ENCODE measurements at regions of chr11 and their contacts with region 1.

Region 1: GRCh38 chr11:108101090-108101775 is 20.1 kb upstream of the ACAT1 start:
- DNase-seq: no peak
- H3K4me3 ChIP-seq: no peak overlapping the region
- H3K27ac ChIP-seq: no peak overlapping the region
- H3K4me1 ChIP-seq: no peaks in the 10 kb centered on the region
- H3K27me3 ChIP-seq: no peaks in the 10 kb centered on the region
- CTCF ChIP-seq: no peak
- POLR2A ChIP-seq: no peak

Region 2: GRCh38 chr11:107858217-107859070 is 242.8 kb before region 1 on chr11 and contains the start of gene SLC35F2:
- intact Hi-C with region 1: no loop called
- DNase-seq: peak; percentile 28 to 53 (median 41)
- H3K4me3 ChIP-seq: peak within 1 kb of the TSS in 3 of 4 donors; percentile 28 to 71 (median 62)
- H3K27ac ChIP-seq: peak within 1 kb of the TSS in 1 of 5 donors; percentile 37
- H3K4me1 ChIP-seq: peaks cover 7 to 17% of the 10 kb centered on the region in 2 donors
- H3K27me3 ChIP-seq: no peaks in the 10 kb centered on the region
- CTCF ChIP-seq: no peak
- POLR2A ChIP-seq: no peak
- total RNA-seq, gene SLC35F2: 0.33 to 6.3 (median 1.5) TPM

Region 3: GRCh38 chr11:108009497-108010360 is 91.5 kb before region 1 on chr11:
- intact Hi-C with region 1: loop called in 1 of 2 experiments (anchors 10 kb)
- DNase-seq: peak in 3 of 7 donors; percentile 23 to 25 (median 23)
- H3K4me3 ChIP-seq: peak overlapping the region; percentile 46 to 99 (median 96)
- H3K27ac ChIP-seq: peak overlapping the region in 4 of 5 donors; percentile 97 to 98 (median 98)
- H3K4me1 ChIP-seq: peaks cover 22 to 47% of the 10 kb centered on the region in 2 donors
- H3K27me3 ChIP-seq: no peaks in the 10 kb centered on the region
- CTCF ChIP-seq: no peak
- POLR2A ChIP-seq: no peak

Measured in adrenal gland (tissue), 19 donors.